RWPE1 (cell line): ENCODE measurements at regions of chr19 and their contacts with region 1.

Region 1: GRCh38 chr19:49301165-49301865 is 23.7 kb downstream of the SLC6A16 start:
- DNase-seq: peak; percentile 68
- H3K27ac ChIP-seq: no peak overlapping the region
- CTCF ChIP-seq: peak; percentile 80

Region 2: GRCh38 chr19:49085020-49085867 is 216.1 kb before region 1 on chr19 and contains the start of gene SNRNP70:
- CTCF ChIA-PET with region 1: no interaction called
- POLR2A ChIA-PET with region 1: no interaction called
- DNase-seq: peak; percentile 100
- H3K27ac ChIP-seq: peak within 1 kb of the TSS; percentile 84
- CTCF ChIP-seq: no peak

Region 3: DNA sequence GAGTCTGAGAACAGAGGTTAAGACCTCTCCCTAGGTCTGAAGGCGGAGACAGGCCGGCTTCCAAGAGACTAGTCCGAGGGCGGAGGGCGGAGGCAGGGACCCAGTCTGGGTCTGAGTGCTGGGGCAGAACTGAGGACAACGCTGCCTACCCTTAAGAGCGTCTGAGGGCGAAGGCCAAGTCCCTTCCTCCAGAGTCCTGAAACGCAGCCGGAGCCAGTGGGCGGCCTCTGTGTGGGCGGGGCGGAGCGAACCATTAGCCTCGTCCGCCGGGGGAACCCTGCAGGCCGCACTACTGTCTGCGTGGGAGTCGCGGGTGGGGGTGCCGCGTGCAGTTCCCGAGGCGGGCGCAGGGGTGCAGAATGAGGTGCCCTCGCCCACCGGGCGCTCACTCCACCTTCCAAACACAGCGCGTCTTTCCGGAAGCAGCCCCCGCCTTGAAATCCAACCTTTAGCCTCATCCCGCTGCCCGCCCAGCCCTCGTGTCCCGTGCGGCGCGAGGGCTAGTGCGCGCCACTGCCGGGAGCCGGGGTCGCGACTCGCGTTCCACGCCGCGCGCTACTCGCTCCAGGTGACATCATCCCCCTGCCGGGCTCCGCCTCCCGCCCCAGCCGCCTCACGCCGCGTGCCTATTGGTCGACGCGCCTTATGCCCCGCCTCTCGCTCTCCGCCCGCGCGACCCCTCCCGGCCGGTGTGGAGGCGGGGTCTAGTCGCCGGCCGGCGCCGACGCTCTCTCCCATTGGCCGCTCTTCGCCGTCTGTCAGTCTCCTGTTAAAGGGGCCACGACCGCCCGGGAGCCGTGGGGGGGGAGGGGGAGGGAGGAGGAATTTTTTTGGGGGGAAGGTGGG is 182.5 kb before region 1 on chr19 and contains the start of gene C19orf73:
- CTCF ChIA-PET with region 1: no interaction called
- POLR2A ChIA-PET with region 1: no interaction called
- DNase-seq: peak; percentile 99
- H3K27ac ChIP-seq: peak within 1 kb of the TSS; percentile 88
- CTCF ChIP-seq: no peak

Region 4: GRCh38 chr19:49249933-49250332 is 51.4 kb before region 1 on chr19:
- CTCF ChIA-PET with region 1: no interaction called
- POLR2A ChIA-PET with region 1: no interaction called
- DNase-seq: no peak
- H3K27ac ChIP-seq: no peak overlapping the region
- CTCF ChIP-seq: no peak

Region 5: DNA sequence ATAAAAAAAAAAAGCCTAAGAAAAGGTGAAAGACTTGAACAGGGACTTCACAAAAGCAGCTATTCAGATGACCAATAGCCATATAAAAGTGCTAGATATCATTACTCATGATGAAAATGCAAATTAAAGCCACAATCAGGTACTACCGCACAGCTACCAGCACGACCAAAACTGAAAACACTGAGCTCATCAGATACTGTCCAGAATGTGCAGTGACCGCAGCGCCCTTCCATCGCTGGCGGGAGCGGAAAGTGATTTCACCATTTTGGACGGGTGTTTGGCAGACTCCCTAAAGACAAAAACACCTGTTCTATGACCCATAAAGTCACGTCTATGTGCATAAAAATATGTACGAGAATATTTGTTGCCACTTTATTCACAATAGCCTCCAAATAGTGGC is 37.1 kb before region 1 on chr19:
- CTCF ChIA-PET with region 1: interaction called, 11 read pairs
- POLR2A ChIA-PET with region 1: no interaction called
- DNase-seq: no peak
- H3K27ac ChIP-seq: no peak overlapping the region
- CTCF ChIP-seq: no peak

Region 6: GRCh38 chr19:49272184-49272583 is 29.1 kb before region 1 on chr19:
- CTCF ChIA-PET with region 1: interaction called, 10 read pairs
- POLR2A ChIA-PET with region 1: no interaction called
- DNase-seq: peak; percentile 88
- H3K27ac ChIP-seq: peak overlapping the region; percentile 93
- CTCF ChIP-seq: no peak